Head of caudate nucleus (tissue), 42 donors: ENCODE measurements at regions of chr4 and their contacts with region 1.

Region 1: DNA sequence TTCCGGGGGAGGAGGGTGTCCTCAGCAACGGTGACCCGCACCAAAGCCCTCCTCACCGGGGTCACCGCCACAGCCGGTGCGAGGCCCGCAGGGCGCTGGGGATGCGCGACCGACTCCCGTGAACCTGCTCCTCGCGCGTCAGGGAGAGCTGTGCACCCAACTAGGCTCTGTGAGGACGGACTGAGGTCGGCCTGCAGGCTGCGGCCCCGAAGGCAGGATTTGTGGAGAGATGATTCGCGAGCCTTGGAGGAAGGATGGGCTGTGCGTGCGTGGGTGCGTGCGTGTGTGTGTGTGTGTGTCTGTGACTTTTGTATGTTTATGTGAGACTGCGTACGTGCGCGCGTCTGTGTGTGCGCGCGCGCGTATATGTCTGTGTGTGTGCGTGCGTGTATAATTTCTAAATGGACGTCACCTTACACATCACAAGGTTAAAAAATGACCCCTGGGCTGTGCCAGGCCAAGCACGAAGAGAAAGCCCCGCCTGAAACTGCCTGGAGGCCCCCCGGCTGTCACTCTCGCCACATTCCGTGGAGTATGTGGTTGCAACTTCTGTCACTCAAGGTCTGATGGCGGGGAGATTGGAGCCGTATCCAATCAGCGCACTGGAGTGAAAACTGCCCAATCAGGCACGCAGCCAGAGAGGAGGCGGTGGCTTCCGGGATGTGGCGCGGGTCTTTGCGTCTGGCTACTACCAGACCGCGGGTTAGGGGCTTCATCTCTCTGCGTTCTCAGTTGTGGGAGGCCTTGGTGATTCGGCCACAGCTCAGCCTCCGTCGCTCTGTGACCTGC is at the start of gene ZNF141:
- DNase-seq: peak; percentile 93 to 99 (median 98)

Region 2: GRCh38 chr4:99863-100262 is 237.5 kb before region 1 on chr4:
- intact Hi-C with region 1: no loop called
- DNase-seq: no peak

Region 3: DNA sequence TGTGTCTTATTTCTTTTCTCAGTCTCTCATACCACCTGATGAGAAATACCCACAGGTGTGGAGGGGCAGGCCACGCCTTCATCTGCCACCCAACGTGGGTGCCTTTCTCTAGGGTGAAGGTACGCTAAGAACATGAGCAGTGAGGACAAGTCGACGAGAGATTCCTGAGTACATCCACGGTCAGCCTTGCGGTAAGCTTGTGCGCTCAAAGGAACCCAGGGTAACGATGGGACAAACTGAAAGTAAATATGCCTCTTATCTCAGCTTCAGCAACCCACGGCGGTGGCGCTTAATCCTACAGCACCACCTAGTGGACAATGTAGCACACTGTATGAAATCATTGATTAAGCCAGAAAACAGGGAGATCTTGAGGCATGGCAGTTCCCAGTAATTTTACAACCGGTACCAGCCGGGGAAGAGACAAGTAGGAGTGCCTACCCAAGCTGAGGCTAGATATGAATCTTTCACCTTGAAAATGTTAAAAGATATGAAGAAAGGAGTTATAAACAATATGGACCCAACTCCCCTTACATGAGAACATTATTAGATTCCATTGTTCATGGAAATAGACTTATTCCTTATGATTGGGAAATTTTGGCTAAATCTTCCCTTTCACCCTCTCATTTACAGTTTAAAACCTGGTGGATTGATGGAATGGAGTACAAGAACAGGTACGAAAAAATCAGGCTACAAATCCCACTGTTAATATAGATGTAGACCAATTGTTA is 95.1 kb before region 1 on chr4:
- intact Hi-C with region 1: loop called (anchors 5 kb)
- DNase-seq: peak; percentile 19 to 88 (median 70)

Region 4: GRCh38 chr4:1167247-1167949 is 830.1 kb after region 1 on chr4:
- intact Hi-C with region 1: no loop called
- DNase-seq: peak; percentile 58 to 92 (median 82)